CD4-positive, alpha-beta memory T cell (primary cell): ENCODE measurements at regions of chr9 and their contacts with region 1.

Region 1: DNA sequence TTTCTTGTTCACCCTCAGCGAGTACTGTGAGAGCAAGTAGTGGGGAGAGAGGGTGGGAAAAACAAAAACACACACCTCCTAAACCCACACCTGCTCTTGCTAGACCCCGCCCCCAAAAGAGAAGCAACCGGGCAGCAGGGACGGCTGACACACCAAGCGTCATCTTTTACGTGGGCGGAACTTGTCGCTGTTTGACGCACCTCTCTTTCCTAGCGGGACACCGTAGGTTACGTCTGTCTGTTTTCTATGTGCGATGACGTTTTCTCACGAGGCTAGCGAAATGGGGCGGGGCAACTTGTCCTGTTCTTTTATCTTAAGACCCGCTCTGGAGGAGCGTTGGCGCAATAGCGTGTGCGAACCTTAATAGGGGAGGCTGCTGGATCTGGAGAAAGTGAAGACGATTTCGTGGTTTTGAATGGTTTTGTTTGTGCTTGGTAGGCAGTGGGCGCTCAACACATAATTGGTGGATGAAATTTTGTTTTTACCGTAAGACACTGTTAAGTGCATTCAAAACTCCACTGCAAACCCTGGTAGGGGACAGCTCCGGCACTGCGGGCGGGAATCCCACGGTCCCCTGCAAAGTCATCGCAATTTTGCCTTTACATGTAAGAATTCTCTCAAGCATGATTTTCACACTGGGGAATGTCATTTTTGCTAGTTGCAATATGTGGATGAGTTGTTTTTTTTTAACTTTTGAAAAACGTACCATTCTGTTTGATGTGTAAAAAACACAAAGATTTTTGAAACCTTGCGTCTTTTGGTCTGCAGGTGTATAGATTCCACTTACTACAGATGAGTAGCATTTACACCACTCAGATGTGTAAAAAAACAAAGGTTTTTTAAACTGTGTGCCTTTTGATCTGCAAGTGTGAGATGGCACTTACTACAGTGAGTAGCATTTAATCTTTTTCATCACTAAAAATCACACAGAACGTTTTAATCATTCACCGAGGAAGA is 631 bp upstream of the C9orf72 start:
- DNase-seq: peak; percentile 96 to 99 (median 98)
- H3K4me3 ChIP-seq: peak overlapping the region; percentile 49 to 78
- H3K4me3 Mint-ChIP-seq: peak overlapping the region; percentile 94 to 99 (median 98)
- H3K27ac ChIP-seq: peak overlapping the region; percentile 94
- H3K27ac Mint-ChIP-seq: peak overlapping the region; percentile 98 to 100 (median 99)
- H3K4me1 ChIP-seq: peaks cover 14% of the 10 kb centered on the region
- H3K4me1 Mint-ChIP-seq: peaks cover 15 to 37% (median 22%) of the 10 kb centered on the region in 4 donors
- H3K27me3 ChIP-seq: no peaks in the 10 kb centered on the region
- H3K27me3 Mint-ChIP-seq: peaks cover 0 to 5% of the 10 kb centered on the region in 2 donors

Region 2: GRCh38 chr9:26946753-26947727 is 626.9 kb before region 1 on chr9 and contains the start of gene PLAA:
- CTCF ChIA-PET with region 1: no interaction called
- POLR2A ChIA-PET with region 1: interaction called, 5 read pairs
- intact Hi-C with region 1: loop called (anchors 2 kb)
- DNase-seq: peak; percentile 88 to 92 (median 91)
- H3K4me3 ChIP-seq: peak within 1 kb of the TSS; percentile 94 to 96
- H3K4me3 Mint-ChIP-seq: peak within 1 kb of the TSS; percentile 92 to 99 (median 97)
- H3K27ac ChIP-seq: peak within 1 kb of the TSS; percentile 96
- H3K27ac Mint-ChIP-seq: peak within 1 kb of the TSS; percentile 98 to 100 (median 99)
- H3K4me1 ChIP-seq: peaks cover 47% of the 10 kb centered on the region
- H3K4me1 Mint-ChIP-seq: peaks cover 40 to 63% (median 50%) of the 10 kb centered on the region in 4 donors
- H3K27me3 ChIP-seq: no peaks in the 10 kb centered on the region
- H3K27me3 Mint-ChIP-seq: peaks cover 0 to 3% of the 10 kb centered on the region in 2 donors
- total RNA-seq, gene PLAA: 24.0 to 28.3 TPM

Region 3: GRCh38 chr9:27561685-27562084 is 12.2 kb before region 1 on chr9:
- CTCF ChIA-PET with region 1: no interaction called
- POLR2A ChIA-PET with region 1: interaction called, 12 read pairs
- intact Hi-C with region 1: no loop called
- DNase-seq: no peak
- H3K4me3 ChIP-seq: no peak overlapping the region
- H3K4me3 Mint-ChIP-seq: no peak overlapping the region
- H3K27ac ChIP-seq: no peak overlapping the region
- H3K27ac Mint-ChIP-seq: peak overlapping the region in 1 of 7 donors; percentile 46
- H3K4me1 ChIP-seq: no peaks in the 10 kb centered on the region
- H3K4me1 Mint-ChIP-seq: peaks cover 0 to 3% (median under 1%) of the 10 kb centered on the region in 4 donors
- H3K27me3 ChIP-seq: no peaks in the 10 kb centered on the region
- H3K27me3 Mint-ChIP-seq: no peaks in the 10 kb centered on the region

Region 4: GRCh38 chr9:27600256-27600655 is 26.3 kb after region 1 on chr9:
- CTCF ChIA-PET with region 1: no interaction called
- POLR2A ChIA-PET with region 1: no interaction called
- intact Hi-C with region 1: no loop called
- DNase-seq: no peak
- H3K4me3 ChIP-seq: no peak overlapping the region
- H3K4me3 Mint-ChIP-seq: no peak overlapping the region
- H3K27ac ChIP-seq: no peak overlapping the region
- H3K27ac Mint-ChIP-seq: no peak overlapping the region
- H3K4me1 ChIP-seq: no peaks in the 10 kb centered on the region
- H3K4me1 Mint-ChIP-seq: no peaks in the 10 kb centered on the region
- H3K27me3 ChIP-seq: no peaks in the 10 kb centered on the region
- H3K27me3 Mint-ChIP-seq: peaks cover 0 to 5% of the 10 kb centered on the region in 2 donors

Region 5: DNA sequence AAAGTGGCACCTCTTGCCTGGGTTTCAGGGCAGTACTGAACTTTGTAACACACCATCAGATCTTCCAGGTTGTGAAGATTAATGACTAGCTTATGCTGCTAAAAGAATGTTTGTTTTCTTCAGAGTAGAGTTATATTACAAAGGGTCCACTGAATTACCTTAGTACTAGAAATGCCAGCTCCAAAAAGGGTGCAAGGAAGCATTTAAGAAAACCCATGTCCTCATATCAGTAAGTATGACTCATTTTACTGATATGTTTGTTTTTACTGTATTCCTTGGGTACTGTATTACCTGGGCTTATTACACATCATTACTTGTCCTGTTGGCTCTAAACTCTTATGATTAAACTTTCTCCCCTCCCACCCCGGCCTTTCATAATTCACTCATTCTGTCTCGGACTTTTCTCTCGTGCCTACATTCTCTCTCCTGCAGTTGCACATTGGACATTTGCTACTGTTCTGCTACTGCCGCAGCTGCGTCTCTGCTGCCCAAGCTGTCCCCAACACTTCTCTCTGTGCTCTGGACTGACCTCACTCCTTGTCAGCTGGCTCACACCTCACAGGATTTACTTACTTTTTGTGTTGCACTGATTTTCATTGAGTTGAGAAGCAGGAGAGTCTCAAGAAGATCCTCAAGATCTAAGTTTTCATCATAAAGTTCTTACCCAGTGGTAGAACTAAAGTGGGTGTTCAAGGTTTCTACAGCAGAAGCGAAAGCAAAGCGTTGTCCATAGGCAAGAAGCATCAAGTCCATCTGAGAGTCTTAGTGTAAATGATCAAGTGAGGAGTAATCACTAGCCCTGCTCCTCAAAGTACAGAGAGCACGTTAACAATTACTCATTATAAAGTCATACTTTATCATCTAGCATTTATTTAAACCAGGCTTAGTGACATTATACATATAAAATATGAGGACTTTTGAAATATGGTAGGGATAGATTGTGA is 52.6 kb after region 1 on chr9:
- CTCF ChIA-PET with region 1: no interaction called
- POLR2A ChIA-PET with region 1: no interaction called
- intact Hi-C with region 1: no loop called
- DNase-seq: no peak
- H3K4me3 ChIP-seq: no peak overlapping the region
- H3K4me3 Mint-ChIP-seq: no peak overlapping the region
- H3K27ac ChIP-seq: no peak overlapping the region
- H3K27ac Mint-ChIP-seq: no peak overlapping the region
- H3K4me1 ChIP-seq: no peaks in the 10 kb centered on the region
- H3K4me1 Mint-ChIP-seq: no peaks in the 10 kb centered on the region
- H3K27me3 ChIP-seq: no peaks in the 10 kb centered on the region
- H3K27me3 Mint-ChIP-seq: peaks cover 7 to 10% of the 10 kb centered on the region in 2 donors